Body of pancreas (tissue), 4 donors: ENCODE measurements at regions of chr19 and their contacts with region 1.

Region 1: GRCh38 chr19:54294539-54294938 is 13.6 kb upstream of the LILRB2 start:
- DNase-seq: no peak
- ATAC-seq: no peak
- H3K4me3 ChIP-seq: no peak overlapping the region
- H3K27ac ChIP-seq: no peak overlapping the region
- H3K4me1 ChIP-seq: no peaks in the 10 kb centered on the region
- H3K27me3 ChIP-seq: no peaks in the 10 kb centered on the region
- CTCF ChIP-seq: no peak
- POLR2A ChIP-seq: no peak

Region 2: DNA sequence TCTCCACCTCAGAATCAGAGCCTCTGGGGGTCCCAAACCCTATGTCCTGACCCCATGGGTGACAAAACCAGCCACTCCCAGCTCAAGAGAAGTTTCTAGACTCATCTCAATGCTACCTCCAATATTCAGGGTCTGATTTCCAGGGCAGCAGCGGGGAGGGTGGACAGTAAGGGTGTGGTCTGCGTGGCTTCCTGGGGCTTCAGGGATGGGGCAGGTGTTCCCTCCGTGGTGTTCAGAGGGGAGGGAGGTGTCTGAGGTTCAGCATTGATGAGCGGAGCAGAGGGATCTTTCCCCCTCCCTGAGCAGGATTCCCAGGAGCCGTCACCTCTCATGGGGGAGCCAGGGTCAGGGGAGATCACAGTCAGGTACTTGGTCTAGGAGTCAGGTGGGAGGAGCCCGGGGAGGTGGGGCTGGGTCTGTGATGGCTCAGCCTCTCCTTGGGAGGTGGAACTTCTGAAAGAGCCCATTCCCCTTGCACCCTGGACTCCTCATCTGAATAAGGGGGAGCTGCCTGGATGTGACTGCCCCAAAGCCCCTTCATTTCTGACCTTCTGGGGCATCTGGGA is 282.0 kb after region 1 on chr19:
- intact Hi-C with region 1: loop called (anchors 2 kb)
- DNase-seq: no peak
- ATAC-seq: no peak
- H3K4me3 ChIP-seq: no peak overlapping the region
- H3K27ac ChIP-seq: no peak overlapping the region
- H3K4me1 ChIP-seq: no peaks in the 10 kb centered on the region
- H3K27me3 ChIP-seq: no peaks in the 10 kb centered on the region
- CTCF ChIP-seq: no peak
- POLR2A ChIP-seq: no peak